Left ventricle myocardium superior (tissue), 1 donor: ENCODE measurements at regions of chrX and their contacts with region 1.

Region 1: GRCh38 chrX:17818726-17819125 is 42.4 kb downstream of the RAI2 start:
- DNase-seq: no peak
- ATAC-seq: no peak

Region 2: DNA sequence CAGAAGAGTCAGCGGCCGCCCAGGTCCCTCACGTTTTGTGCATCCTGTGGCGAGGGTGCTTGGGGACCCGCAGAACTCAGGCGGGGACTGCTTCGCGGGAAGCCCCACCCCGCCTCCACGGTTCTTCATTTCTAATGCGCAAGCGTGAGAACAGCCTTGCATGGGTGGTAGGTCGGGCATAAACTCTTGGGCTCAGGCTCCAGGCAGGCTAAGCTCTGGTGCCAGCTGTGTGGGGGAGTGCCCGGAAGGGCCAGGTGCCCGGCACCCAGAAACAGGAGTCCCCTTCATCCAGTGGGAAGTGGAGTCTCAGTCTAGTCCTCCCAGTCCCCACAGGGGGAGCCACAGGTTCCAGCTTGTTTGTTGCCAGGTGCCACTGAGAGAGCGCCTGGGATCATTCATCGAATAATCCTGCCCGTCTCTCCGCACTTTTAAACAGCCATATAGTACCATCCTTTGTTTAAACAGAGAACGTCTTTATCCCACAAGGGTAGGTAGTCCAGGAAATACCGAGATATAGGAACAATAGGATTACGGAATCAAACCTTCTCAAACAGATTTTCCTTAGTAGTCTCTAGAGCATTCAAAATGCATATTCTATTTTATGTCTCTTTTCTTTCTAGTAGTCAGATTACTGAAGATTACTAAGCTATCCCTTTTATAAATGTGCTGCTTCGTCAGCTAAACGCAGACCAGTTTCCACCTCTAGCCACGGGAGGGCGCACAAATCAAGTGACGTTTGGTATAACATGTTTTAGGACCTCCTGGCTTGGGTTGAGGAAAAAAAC is 935.8 kb before region 1 on chrX:
- intact Hi-C with region 1: no loop called
- DNase-seq: peak; percentile 66
- ATAC-seq: peak; percentile 89

Region 3: DNA sequence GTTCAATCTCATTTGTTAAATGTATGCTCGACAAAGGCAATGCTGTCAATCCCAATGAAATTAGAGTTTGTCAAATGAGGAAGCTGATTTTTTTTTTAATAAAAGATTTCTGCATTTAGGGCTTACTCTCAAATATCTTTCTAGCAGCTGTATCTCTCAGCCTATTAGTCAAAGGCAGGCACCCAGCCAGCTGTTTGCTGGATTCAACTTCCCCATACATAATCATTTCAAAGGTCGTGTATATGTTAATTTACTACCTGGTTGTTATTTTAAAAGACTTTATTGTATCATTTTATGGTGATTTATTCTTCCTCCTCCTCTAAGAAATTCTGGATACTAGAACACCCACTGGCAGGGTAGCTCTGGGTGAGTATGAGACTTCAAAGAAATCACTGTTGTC is 15.2 kb after region 1 on chrX:
- intact Hi-C with region 1: loop called (anchors 2 kb)
- DNase-seq: no peak
- ATAC-seq: no peak

Region 4: GRCh38 chrX:18026166-18026565 is 207.4 kb after region 1 on chrX:
- intact Hi-C with region 1: no loop called
- DNase-seq: no peak
- ATAC-seq: peak; percentile 79